Gastrocnemius medialis (tissue), 4 donors: ENCODE measurements at regions of chrX and their contacts with region 1.

Region 1: DNA sequence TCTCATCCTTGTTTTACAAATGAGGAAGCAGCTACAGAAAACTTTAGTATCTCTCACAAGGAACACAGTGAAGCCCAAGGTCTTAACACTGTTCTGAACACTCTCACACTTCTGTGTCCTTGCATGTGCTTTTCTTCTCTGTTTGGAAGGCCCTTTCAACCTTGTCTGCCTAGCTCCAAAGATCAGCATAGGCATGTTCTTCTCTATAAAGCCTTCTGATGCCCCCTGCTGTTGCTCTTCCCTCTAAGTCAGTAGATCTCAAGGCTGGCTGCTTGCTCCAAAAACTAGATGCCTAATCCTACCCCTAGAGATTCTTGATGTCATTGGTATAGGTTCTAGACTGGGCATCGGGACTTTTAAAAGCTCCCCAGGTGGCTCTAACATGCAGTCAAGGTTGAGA is 5.9 kb downstream of the APOO start:
- DNase-seq: peak; percentile 7 to 37
- ATAC-seq: peak; percentile 83
- H3K4me3 ChIP-seq: no peak overlapping the region
- H3K27ac ChIP-seq: peak overlapping the region; percentile 50 to 75 (median 66)
- H3K4me1 ChIP-seq: peaks cover 21 to 26% of the 10 kb centered on the region in 2 donors
- H3K27me3 ChIP-seq: no peaks in the 10 kb centered on the region
- CTCF ChIP-seq: peak in 4 of 5 experiments; percentile 29 to 34 (median 30)
- POLR2A ChIP-seq: no peak

Region 2: DNA sequence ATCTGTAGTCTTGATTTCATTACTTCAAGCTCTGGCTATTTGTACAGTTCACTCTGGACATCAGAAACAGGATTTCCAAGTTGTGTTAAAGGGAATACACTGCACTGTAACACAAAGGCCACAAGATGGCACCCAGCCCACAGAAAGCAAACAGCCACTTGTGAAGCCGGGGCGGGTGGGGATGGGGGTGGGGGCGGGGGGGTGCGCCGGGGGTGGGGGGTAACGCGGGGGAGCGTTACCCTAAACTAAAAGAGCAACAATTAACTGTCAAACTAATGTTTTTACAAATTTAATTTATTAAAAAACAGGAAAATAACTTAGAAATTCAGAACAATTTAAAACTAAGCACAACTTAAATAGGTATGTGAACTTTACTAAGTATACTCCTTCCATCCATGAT is 207.2 kb before region 1 on chrX:
- in situ Hi-C with region 1: loop called in 3 of 4 experiments (anchors 5 to 25 kb)
- intact Hi-C with region 1: loop called (anchors 2 kb)
- DNase-seq: peak; percentile 12 to 35
- ATAC-seq: peak; percentile 49 to 50
- H3K4me3 ChIP-seq: no peak overlapping the region
- H3K27ac ChIP-seq: no peak overlapping the region
- H3K4me1 ChIP-seq: no peaks in the 10 kb centered on the region
- H3K27me3 ChIP-seq: no peaks in the 10 kb centered on the region
- CTCF ChIP-seq: peak in 2 of 5 experiments; percentile 47 to 49
- POLR2A ChIP-seq: no peak